ENCODE measurements at regions of chr4 and their contacts with region 1.

Region 1: DNA sequence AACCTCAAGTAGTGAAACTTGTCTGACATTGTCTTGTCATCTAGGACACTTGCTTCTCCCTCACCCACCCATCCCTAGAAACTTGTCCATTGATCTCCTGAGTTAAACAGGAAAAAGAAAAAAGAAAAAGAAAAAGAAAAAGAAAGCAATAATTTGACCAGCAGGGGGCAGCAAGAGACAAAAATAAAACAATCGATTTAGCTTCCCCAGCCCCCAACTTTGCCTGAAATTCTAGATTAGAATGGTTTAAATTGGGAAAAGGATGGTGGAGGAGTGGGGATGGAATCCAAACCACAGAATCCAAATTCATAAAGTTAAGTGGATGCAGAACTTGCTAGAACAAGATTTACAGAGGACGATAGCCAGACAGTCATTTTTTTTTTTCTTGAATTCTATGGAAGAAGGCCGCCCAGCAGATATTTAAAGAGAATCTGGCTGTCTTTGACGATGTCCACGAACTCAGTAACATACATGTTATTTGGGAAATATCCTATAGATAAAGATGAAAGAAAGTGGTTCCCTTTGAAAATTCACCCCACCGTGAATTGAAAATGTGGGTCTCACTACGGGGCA is 282.9 kb downstream of the USP46 start:
- DNase-seq: peak in 1 of 2 experiments; percentile 53
- H3K4me3 ChIP-seq: no peak overlapping the region
- H3K4me3 Mint-ChIP-seq: no peak overlapping the region
- H3K27ac Mint-ChIP-seq: no peak overlapping the region
- H3K4me1 ChIP-seq: no peaks in the 10 kb centered on the region
- H3K4me1 Mint-ChIP-seq: no peaks in the 10 kb centered on the region
- H3K27me3 ChIP-seq: no peaks in the 10 kb centered on the region
- H3K27me3 Mint-ChIP-seq: peaks cover 21% of the 10 kb centered on the region
- CTCF ChIP-seq: peak; percentile 42 to 61

Region 2: DNA sequence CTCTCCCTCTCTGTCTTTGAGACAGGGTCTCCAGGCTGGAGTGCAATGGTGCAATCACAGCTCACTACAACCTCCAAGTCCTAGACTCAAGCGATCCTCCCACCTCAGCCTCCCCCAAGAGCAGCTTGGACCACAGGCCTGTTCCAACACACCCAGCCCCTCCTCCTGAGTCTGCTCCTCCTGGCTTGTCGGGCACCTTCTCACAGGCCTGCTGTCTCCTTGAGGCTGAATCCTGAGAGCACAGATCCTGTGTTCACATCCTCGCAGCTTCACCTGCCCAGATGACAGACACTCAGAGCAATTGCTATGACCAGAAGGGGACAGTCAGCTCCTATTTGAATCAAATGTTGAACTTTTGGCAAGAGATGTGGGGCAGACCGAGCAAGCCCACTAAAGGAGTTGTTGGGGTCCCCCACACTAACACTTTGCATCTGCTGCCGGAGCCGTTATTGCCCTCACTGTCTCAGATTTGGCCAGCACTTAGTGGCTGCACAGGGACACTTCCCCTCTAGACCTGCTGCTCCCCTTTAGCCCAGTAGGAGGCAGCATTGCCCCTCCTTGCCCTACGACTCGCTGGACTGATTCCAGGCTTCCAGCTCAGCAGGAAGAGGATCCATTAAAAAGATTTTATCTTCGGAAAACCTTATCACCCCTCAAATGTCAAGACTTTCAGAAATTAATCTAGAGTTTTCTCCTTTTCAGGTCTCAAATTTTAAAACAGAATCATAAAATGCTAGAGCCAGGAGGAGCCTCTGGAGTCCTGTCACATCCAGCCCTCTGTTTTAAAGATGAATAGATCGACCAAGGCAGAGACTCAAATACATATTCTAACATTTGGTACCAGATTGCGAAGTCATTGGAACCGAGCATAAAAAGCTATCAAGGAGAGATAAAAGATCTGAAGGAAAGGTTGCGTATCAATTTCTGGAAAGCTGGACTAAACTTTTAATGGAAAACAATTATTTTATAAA is 169.2 kb after region 1 on chr4:
- CTCF ChIA-PET with region 1: no interaction called
- POLR2A ChIA-PET with region 1: no interaction called
- intact Hi-C with region 1: loop called (anchors 10 kb)
- DNase-seq: peak; percentile 49 to 74
- H3K4me3 ChIP-seq: no peak overlapping the region
- H3K4me3 Mint-ChIP-seq: no peak overlapping the region
- H3K27ac Mint-ChIP-seq: no peak overlapping the region
- H3K4me1 ChIP-seq: no peaks in the 10 kb centered on the region
- H3K4me1 Mint-ChIP-seq: no peaks in the 10 kb centered on the region
- H3K27me3 ChIP-seq: no peaks in the 10 kb centered on the region; the same call in none of the 2 replicates
- H3K27me3 Mint-ChIP-seq: no peaks in the 10 kb centered on the region
- CTCF ChIP-seq: peak; percentile 84

Region 3: GRCh38 chr4:52665592-52665991 is 289.4 kb after region 1 on chr4:
- CTCF ChIA-PET with region 1: no interaction called
- POLR2A ChIA-PET with region 1: no interaction called
- intact Hi-C with region 1: loop called (anchors 2 kb)
- DNase-seq: no peak
- H3K4me3 ChIP-seq: no peak overlapping the region
- H3K4me3 Mint-ChIP-seq: no peak overlapping the region
- H3K27ac Mint-ChIP-seq: no peak overlapping the region
- H3K4me1 ChIP-seq: peaks cover 2% of the 10 kb centered on the region; the same call in 1 of the 2 replicates
- H3K4me1 Mint-ChIP-seq: peaks cover 19% of the 10 kb centered on the region
- H3K27me3 ChIP-seq: no peaks in the 10 kb centered on the region
- H3K27me3 Mint-ChIP-seq: peaks cover 6% of the 10 kb centered on the region
- CTCF ChIP-seq: peak in 1 of 2 experiments; percentile 22